Dorsolateral prefrontal cortex (tissue), 120 donors: ENCODE measurements at regions of chr13 and their contacts with region 1.

Region 1: GRCh38 chr13:49279885-49280284 is 32.2 kb downstream of the CDADC1 start:
- DNase-seq: no peak
- H3K4me3 ChIP-seq: no peak overlapping the region
- H3K27ac ChIP-seq: no peak overlapping the region
- H3K27me3 ChIP-seq: no peaks in the 10 kb centered on the region
- CTCF ChIP-seq: no peak

Region 2: GRCh38 chr13:49100637-49101570 is 179.0 kb before region 1 on chr13:
- intact Hi-C with region 1: loop called in 1 of 2 experiments (anchors 5 kb)
- DNase-seq: no peak
- H3K4me3 ChIP-seq: no peak overlapping the region
- H3K27ac ChIP-seq: no peak overlapping the region
- H3K27me3 ChIP-seq: no peaks in the 10 kb centered on the region
- CTCF ChIP-seq: no peak

Region 3: GRCh38 chr13:49481788-49482187 is 201.9 kb after region 1 on chr13:
- intact Hi-C with region 1: no loop called
- DNase-seq: no peak
- H3K4me3 ChIP-seq: no peak overlapping the region
- H3K27ac ChIP-seq: no peak overlapping the region
- H3K27me3 ChIP-seq: no peaks in the 10 kb centered on the region
- CTCF ChIP-seq: no peak